GM10248 (cell line): ENCODE measurements at regions of chr22 and their contacts with region 1.

Region 1: GRCh38 chr22:36065775-36066559 is 37.3 kb upstream of the RBFOX2 start:
- DNase-seq: peak; percentile 78
- CTCF ChIP-seq: peak; percentile 80

Region 2: DNA sequence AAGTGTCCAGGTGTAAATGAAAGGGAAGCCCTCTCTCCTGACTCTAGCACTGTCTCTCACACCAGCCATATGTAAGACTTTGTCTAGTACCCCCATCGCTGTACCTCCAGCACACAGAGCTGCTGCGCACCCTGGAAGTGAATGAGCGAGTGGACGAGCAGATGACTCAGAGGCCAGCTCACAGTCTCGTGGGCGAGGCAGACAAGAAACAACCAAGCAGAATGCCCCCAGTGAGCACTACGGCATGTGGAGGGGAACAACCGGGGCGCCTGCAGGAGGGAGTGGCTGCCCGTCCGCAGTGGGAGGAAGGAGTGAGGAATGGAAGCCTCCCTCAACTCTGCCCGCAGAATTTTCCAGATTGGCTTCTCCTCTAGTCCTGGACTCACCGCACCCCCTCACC is 619.6 kb before region 1 on chr22:
- CTCF ChIA-PET with region 1: no interaction called
- POLR2A ChIA-PET with region 1: no interaction called
- DNase-seq: no peak
- CTCF ChIP-seq: no peak

Region 3: GRCh38 chr22:36022697-36023096 is 43.3 kb before region 1 on chr22:
- CTCF ChIA-PET with region 1: interaction called, 11 read pairs
- POLR2A ChIA-PET with region 1: no interaction called
- DNase-seq: no peak
- CTCF ChIP-seq: no peak

Region 4: GRCh38 chr22:36036167-36036624 is 29.8 kb before region 1 on chr22:
- CTCF ChIA-PET with region 1: interaction called, 12 read pairs
- POLR2A ChIA-PET with region 1: no interaction called
- DNase-seq: no peak
- CTCF ChIP-seq: no peak

Region 5: DNA sequence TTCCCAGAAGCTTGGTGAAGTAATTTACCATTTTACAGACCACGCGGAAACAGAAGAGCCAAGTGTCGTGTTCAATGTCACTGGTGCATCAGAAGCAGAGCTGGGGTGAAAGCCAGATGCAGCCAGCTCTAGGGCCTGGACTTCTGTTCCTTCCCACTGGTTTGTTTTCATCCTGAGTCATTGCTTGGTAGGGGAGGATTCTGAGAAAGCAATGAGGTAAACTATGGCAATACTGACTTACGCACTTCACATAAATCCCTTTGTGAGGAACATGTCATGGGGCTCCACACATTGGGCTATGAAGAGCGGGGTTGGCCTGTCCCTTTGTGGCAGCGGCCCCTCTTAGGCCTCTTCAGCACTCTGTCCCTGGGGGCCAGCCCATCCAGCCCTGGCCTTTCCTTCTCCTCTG is 15.1 kb after region 1 on chr22:
- CTCF ChIA-PET with region 1: interaction called, 41 read pairs
- POLR2A ChIA-PET with region 1: no interaction called
- DNase-seq: no peak
- CTCF ChIP-seq: no peak